ENCODE measurements at regions of chr3 and their contacts with region 1.

Region 1: GRCh38 chr3:120245386-120245785 is 39.6 kb downstream of the GPR156 start:
- DNase-seq: no peak
- H3K4me3 ChIP-seq: no peak overlapping the region
- H3K4me3 Mint-ChIP-seq: no peak overlapping the region
- H3K27ac ChIP-seq: no peak overlapping the region
- H3K27ac Mint-ChIP-seq: no peak overlapping the region
- H3K4me1 ChIP-seq: no peaks in the 10 kb centered on the region
- H3K4me1 Mint-ChIP-seq: peaks cover 2% of the 10 kb centered on the region
- H3K27me3 ChIP-seq: peaks cover 2% of the 10 kb centered on the region in 2 donors
- H3K27me3 Mint-ChIP-seq: peaks cover 0 to 4% (median 2%) of the 10 kb centered on the region in 3 donors
- CTCF ChIP-seq: no peak

Region 2: DNA sequence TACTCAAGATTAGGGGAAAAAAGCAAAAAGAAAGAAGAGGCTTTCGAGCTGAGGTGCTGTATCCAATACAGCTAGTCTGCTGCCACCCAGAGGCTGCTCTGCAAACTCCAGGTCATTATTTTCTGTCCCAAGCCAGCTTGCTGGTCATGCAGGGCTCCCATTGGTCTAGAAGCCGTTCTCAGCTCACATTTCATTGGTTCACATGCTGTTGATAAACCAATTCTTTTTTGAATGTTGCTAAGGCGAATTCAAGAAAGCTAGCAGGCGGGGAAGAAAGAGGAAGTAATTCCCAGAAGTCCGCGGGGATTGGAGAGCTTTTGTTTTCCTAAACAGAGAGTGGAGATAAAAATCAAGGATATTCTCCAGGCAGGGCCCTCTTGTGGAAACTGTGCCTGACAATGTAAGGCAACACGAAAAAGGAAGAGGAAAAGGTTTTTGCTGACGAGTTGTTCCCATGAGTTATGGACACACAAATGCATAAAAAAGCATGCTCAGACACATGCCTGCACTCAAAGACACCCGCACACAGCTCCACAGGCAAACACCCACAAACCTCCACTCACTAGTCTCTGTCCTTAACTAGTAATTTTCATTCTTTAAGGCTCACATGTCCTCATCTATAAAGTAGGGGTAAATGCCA is 172.0 kb after region 1 on chr3:
- intact Hi-C with region 1: loop called in 1 of 2 experiments (anchors 5 kb)
- DNase-seq: peak; percentile 86 to 97 (median 93)
- H3K4me3 ChIP-seq: peak overlapping the region; percentile 14 to 88 (median 70)
- H3K4me3 Mint-ChIP-seq: peak overlapping the region; percentile 77 to 89
- H3K27ac ChIP-seq: peak overlapping the region in 1 of 2 donors; percentile 12
- H3K27ac Mint-ChIP-seq: peak overlapping the region; percentile 53 to 88 (median 81)
- H3K4me1 ChIP-seq: peaks cover 23 to 31% of the 10 kb centered on the region in 2 donors
- H3K4me1 Mint-ChIP-seq: peaks cover 29% of the 10 kb centered on the region
- H3K27me3 ChIP-seq: no peaks in the 10 kb centered on the region
- H3K27me3 Mint-ChIP-seq: peaks cover 0 to 4% (median 2%) of the 10 kb centered on the region in 3 donors
- CTCF ChIP-seq: peak; percentile 86

Region 3: DNA sequence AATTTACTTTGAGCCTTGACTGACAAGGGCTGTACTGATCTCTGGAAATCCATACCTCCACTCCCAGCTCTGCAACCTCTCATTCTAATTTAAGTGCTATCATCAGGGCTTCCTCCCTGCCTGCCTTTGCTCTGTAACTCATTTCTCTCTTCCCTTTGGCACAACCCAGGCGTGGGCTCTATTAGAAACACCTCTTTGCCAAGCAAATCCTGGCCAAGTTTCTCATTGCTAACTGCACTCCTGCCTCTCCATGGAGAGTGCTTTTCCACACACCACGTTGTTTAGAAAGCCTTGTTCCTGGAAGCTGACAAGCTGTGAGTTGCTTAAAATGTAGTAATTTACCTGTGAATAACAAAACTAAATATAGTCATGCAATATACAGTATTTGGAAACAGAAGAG is 225.5 kb after region 1 on chr3:
- intact Hi-C with region 1: no loop called
- DNase-seq: no peak
- H3K4me3 ChIP-seq: no peak overlapping the region
- H3K4me3 Mint-ChIP-seq: no peak overlapping the region
- H3K27ac ChIP-seq: no peak overlapping the region
- H3K27ac Mint-ChIP-seq: peak overlapping the region in 1 of 7 donors; percentile 47
- H3K4me1 ChIP-seq: no peaks in the 10 kb centered on the region
- H3K4me1 Mint-ChIP-seq: no peaks in the 10 kb centered on the region
- H3K27me3 ChIP-seq: no peaks in the 10 kb centered on the region
- H3K27me3 Mint-ChIP-seq: no peaks in the 10 kb centered on the region
- CTCF ChIP-seq: no peak

Region 4: GRCh38 chr3:120795017-120795648 is 549.7 kb after region 1 on chr3:
- intact Hi-C with region 1: loop called in 1 of 2 experiments (anchors 10 kb)
- DNase-seq: peak; percentile 43 to 66 (median 63)
- H3K4me3 ChIP-seq: no peak overlapping the region
- H3K4me3 Mint-ChIP-seq: no peak overlapping the region
- H3K27ac ChIP-seq: no peak overlapping the region
- H3K27ac Mint-ChIP-seq: no peak overlapping the region
- H3K4me1 ChIP-seq: no peaks in the 10 kb centered on the region
- H3K4me1 Mint-ChIP-seq: no peaks in the 10 kb centered on the region
- H3K27me3 ChIP-seq: peaks cover 0 to 2% of the 10 kb centered on the region in 2 donors
- H3K27me3 Mint-ChIP-seq: peaks cover 0 to 4% (median 4%) of the 10 kb centered on the region in 3 donors
- CTCF ChIP-seq: peak; percentile 81

Measured in CD14-positive monocyte (primary cell).